Activated naive CD4-positive, alpha-beta T cell treated with anti-CD3 and anti-CD28 coated beads for 36 hours (primary cell): ENCODE measurements at regions of chr16 and their contacts with region 1.

Region 1: DNA sequence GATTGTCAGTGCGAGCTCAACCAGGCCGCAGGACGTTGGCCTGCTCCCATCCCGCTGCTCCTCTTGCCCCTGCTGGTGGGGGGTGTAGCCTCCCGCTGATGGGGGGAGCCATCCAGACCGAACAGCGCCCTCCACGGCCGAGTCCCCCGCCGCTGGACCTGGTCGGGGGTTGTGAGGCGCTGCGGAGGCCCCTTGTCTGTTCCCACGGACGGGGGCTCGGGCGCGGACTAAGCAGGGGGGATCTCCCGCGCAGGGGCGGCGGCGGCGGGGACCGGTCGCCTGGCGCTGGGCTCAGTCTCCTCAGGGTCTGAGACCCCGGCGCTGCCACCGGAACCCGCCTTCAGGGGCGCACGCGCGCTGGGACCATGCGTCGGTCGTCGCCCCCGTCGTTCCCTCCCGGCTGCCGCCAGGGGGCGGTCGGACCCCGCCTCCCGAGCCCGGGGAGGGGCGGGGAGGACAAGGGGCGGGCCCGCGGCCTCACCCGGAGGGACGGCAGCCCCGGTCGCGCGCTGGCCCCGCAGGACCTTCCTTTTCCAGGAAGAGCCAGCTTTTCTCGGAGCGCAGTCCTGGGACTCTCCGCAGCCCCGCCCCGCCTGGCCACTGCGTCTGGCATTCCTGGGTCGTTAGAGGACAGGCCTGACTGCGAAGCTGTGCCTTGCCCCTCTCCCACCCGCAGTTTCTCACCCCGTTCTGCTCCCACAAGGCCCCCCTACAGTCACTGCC is 6.3 kb upstream of the IL32 start:
- DNase-seq: peak; percentile 85
- H3K4me3 Mint-ChIP-seq: peak overlapping the region; percentile 89
- H3K27ac Mint-ChIP-seq: peak overlapping the region; percentile 91
- H3K4me1 Mint-ChIP-seq: peaks cover 48% of the 10 kb centered on the region
- H3K27me3 Mint-ChIP-seq: no peaks in the 10 kb centered on the region

Region 2: DNA sequence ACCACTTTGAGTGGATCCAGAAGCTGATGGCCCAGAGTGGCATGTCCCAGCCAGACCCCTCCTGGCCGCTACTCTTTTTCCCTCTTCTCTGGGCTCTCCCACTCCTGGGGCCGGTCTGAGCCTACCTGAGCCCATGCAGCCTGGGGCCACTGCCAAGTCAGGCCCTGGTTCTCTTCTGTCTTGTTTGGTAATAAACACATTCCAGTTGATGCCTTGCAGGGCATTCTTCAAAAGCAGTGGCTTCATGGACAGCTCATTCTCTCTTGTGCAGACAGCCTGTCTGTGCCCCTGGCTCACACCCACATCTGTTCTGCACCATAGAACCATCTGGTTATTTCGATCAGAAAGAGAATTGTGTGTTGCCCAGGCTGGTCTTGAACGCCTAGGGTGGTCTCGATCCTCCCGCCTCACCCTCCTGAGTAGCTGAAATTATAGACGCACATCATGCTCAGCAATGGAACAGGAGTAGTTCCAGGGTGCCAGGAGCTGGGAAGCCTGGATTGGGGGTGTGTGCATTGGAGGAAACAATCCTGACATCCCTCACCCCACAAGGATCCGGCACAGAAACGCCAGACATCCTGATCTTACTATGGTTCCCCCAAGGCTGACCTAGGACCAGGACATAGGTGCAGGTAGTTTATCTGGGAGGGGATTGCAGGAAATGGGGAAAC is 237.5 kb before region 1 on chr16:
- CTCF ChIA-PET with region 1: no interaction called
- intact Hi-C with region 1: no loop called
- DNase-seq: no peak
- H3K4me3 Mint-ChIP-seq: no peak overlapping the region
- H3K27ac Mint-ChIP-seq: no peak overlapping the region
- H3K4me1 Mint-ChIP-seq: no peaks in the 10 kb centered on the region
- H3K27me3 Mint-ChIP-seq: no peaks in the 10 kb centered on the region

Region 3: GRCh38 chr16:2874912-2875362 is 184.2 kb before region 1 on chr16:
- CTCF ChIA-PET with region 1: no interaction called
- intact Hi-C with region 1: no loop called
- DNase-seq: peak; percentile 72
- H3K4me3 Mint-ChIP-seq: no peak overlapping the region
- H3K27ac Mint-ChIP-seq: no peak overlapping the region
- H3K4me1 Mint-ChIP-seq: no peaks in the 10 kb centered on the region
- H3K27me3 Mint-ChIP-seq: no peaks in the 10 kb centered on the region

Region 4: GRCh38 chr16:3003582-3004302 is 55.4 kb before region 1 on chr16:
- CTCF ChIA-PET with region 1: interaction called, 5 read pairs
- intact Hi-C with region 1: loop called (anchors 1 kb)
- DNase-seq: peak; percentile 98
- H3K4me3 Mint-ChIP-seq: peak overlapping the region; percentile 49
- H3K27ac Mint-ChIP-seq: no peak overlapping the region
- H3K4me1 Mint-ChIP-seq: peaks cover 23% of the 10 kb centered on the region
- H3K27me3 Mint-ChIP-seq: peaks cover 2% of the 10 kb centered on the region

Region 5: GRCh38 chr16:3045357-3045728 is 13.8 kb before region 1 on chr16:
- CTCF ChIA-PET with region 1: interaction called, 16 read pairs
- intact Hi-C with region 1: no loop called
- DNase-seq: peak; percentile 57
- H3K4me3 Mint-ChIP-seq: peak overlapping the region; percentile 66
- H3K27ac Mint-ChIP-seq: no peak overlapping the region
- H3K4me1 Mint-ChIP-seq: peaks cover 15% of the 10 kb centered on the region
- H3K27me3 Mint-ChIP-seq: peaks cover 36% of the 10 kb centered on the region

Region 6: DNA sequence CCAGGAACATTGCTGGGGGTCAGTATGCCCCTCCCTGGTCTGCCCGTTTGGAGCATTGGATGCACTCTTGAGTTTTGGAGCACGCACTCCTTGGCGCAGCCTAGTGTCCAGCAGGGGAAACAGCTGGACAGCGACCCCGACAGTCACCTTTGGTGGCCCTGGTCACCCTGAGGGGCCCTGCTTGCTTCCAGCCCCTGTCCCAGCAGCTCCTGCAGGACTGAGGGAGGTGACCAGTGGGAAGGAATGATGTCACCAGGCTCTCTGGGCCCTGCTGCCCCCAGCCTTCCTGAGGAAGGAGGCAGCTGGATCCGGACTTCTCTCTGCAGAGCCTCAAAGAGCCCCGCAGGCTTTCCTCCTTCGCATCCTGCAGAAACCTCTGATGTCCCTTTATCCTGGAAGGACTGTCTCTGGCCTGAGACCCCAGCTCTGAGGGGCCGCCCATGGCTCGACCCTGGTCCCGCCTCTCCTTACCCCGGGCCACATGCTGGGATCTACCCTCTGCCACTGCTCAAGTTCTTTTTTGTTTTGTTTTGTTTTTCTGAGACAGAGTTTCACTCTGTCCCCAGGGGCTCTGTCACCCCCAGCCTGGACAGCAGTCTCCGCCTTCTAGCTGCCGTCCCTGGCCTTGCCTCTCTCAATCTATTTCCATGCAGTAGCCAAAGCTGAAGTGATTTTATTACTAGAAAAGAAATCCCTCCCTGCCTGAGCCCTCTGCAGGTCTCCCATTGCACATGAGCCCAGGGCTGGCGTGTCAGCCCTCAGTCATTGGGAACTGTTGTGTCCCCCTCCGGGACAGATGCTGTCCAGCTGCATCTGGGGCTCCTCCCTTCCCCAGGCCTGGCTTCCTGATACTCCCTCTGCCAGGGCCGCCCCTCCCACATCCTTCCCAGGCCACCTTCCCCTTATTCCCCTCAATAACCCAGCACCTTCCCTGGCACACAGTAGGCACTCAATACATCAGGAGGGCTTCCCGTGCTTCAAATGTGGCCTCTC is 28.4 kb after region 1 on chr16:
- CTCF ChIA-PET with region 1: interaction called, 10 read pairs
- intact Hi-C with region 1: no loop called
- DNase-seq: no peak
- H3K4me3 Mint-ChIP-seq: no peak overlapping the region
- H3K27ac Mint-ChIP-seq: no peak overlapping the region
- H3K4me1 Mint-ChIP-seq: peaks cover 25% of the 10 kb centered on the region
- H3K27me3 Mint-ChIP-seq: no peaks in the 10 kb centered on the region

Region 7: DNA sequence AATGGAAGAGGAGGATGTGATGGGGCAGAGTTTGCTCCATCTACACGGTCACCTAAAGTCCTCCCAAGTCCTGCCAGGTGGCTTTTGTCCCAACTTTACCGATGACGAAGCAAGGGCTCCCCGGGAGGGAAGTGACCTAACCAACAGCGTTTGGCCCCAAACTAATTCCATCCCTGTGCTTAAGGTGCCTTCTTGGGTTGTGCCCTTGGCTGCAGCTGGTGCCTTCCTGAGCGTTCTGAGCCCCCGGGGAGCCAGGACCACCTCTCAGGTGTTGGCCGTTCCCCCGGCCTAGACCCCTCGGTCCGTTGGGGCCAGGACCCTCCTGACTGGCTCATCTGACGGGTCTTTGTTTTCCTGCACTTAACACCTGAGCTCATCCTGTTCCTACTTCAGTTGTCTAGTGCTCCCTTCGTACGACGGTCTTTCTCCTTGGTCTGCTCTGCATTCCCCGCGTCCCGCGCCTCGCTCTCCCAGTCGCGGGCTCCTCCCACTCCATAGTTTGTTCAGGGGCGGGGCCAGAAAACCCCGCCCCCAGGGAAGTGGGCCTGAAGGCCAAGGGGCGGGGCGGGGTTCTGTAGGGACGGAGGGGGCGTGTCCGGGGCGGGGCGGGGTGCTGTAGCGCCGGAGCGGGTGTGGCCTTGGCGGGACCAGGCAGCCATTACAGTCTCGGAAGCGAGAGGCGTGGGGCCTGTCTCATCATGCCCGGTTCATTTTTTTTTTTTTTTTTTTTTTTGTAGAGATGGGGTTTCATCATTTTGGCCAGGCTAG is 40.8 kb after region 1 on chr16:
- CTCF ChIA-PET with region 1: interaction called, 16 read pairs
- intact Hi-C with region 1: loop called (anchors 2 kb)
- DNase-seq: peak; percentile 97
- H3K4me3 Mint-ChIP-seq: peak overlapping the region; percentile 69
- H3K27ac Mint-ChIP-seq: no peak overlapping the region
- H3K4me1 Mint-ChIP-seq: peaks cover 36% of the 10 kb centered on the region
- H3K27me3 Mint-ChIP-seq: no peaks in the 10 kb centered on the region

Region 8: GRCh38 chr16:3166510-3166895 is 107.3 kb after region 1 on chr16:
- CTCF ChIA-PET with region 1: interaction called, 4 read pairs
- intact Hi-C with region 1: loop called (anchors 1 kb)
- DNase-seq: no peak
- H3K4me3 Mint-ChIP-seq: no peak overlapping the region
- H3K27ac Mint-ChIP-seq: no peak overlapping the region
- H3K4me1 Mint-ChIP-seq: peaks cover 19% of the 10 kb centered on the region
- H3K27me3 Mint-ChIP-seq: peaks cover 12% of the 10 kb centered on the region